Activated naive CD4-positive, alpha-beta T cell treated with anti-CD3 and anti-CD28 coated beads for 36 hours (primary cell): ENCODE measurements at regions of chr2 and their contacts with region 1.

Region 1: DNA sequence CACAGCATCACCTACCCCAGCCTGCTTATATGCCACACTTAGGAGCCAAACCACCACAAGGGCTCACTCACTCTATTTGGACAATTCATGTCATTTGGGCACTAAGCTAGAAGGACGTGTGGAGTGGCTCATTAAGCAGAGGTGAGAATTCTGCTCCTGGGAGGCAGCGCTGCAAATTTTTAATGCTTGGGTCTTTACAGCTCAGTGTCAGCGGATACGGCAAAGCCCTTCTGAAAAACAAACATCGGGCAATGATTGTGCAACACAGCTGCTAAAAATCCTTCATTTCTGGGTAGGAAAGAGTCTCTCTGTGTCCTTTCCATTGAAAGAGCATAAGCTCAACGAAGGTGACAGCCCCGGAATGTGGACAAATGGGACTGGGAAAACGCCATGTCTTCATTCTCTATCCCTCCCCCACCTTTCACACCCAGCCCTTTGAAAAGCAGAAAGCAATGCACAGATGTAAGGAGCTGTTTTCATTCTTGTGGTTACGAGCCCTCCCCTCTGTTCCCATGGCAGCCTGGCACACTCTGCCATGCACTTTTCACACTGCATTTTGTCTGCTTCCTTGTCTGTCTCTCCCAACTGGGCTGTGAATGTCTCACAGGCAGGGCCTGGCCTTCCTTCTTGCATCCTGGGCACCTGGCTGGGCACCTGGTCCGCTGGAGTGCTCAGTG is 16.0 kb downstream of the TMEM177 start:
- DNase-seq: peak; percentile 51
- H3K4me3 Mint-ChIP-seq: peak overlapping the region; percentile 32
- H3K27ac Mint-ChIP-seq: no peak overlapping the region
- H3K4me1 Mint-ChIP-seq: peaks cover 48% of the 10 kb centered on the region
- H3K27me3 Mint-ChIP-seq: no peaks in the 10 kb centered on the region

Region 2: GRCh38 chr2:119753041-119753929 is 58.3 kb after region 1 on chr2:
- CTCF ChIA-PET with region 1: no interaction called
- intact Hi-C with region 1: no loop called
- DNase-seq: peak; percentile 43
- H3K4me3 Mint-ChIP-seq: no peak overlapping the region
- H3K27ac Mint-ChIP-seq: no peak overlapping the region
- H3K4me1 Mint-ChIP-seq: peaks cover 14% of the 10 kb centered on the region
- H3K27me3 Mint-ChIP-seq: no peaks in the 10 kb centered on the region

Region 3: DNA sequence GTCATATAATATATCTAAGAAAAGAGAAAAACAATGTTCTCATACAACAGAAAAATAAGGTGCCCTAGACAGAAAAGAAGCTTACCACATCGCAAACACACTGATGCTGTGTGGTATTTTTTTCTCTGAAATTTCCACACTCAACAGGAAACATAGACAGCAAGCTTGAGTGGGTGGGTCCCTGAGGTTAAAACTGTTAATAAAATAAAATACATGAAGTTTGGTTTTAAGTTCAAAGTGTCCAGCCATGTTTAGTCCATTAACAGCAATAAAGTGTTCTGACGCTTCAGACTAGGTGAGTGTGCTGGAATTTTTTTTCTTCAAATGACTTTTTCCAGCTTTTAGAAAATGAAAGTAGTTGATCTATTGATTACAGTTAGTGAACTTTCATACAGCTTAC is 234.6 kb after region 1 on chr2:
- CTCF ChIA-PET with region 1: no interaction called
- intact Hi-C with region 1: loop called (anchors 5 kb)
- DNase-seq: peak; percentile 10
- H3K4me3 Mint-ChIP-seq: peak overlapping the region; percentile 59
- H3K27ac Mint-ChIP-seq: peak overlapping the region; percentile 83
- H3K4me1 Mint-ChIP-seq: peaks cover 49% of the 10 kb centered on the region
- H3K27me3 Mint-ChIP-seq: no peaks in the 10 kb centered on the region

Region 4: GRCh38 chr2:120012771-120013596 is 318.0 kb after region 1 on chr2 and contains the start of gene EPB41L5:
- CTCF ChIA-PET with region 1: no interaction called
- intact Hi-C with region 1: loop called (anchors 5 kb)
- DNase-seq: peak; percentile 79
- H3K4me3 Mint-ChIP-seq: peak within 1 kb of the TSS; percentile 77
- H3K27ac Mint-ChIP-seq: no peak within 1 kb of the TSS
- H3K4me1 Mint-ChIP-seq: peaks cover 8% of the 10 kb centered on the region
- H3K27me3 Mint-ChIP-seq: no peaks in the 10 kb centered on the region
- total RNA-seq, gene EPB41L5: 2.3 to 2.5 TPM